Heart right ventricle (tissue), 16 donors: ENCODE measurements at regions of chr11 and their contacts with region 1.

Region 1: GRCh38 chr11:57205041-57205671 is 23.4 kb downstream of the LRRC55 start:
- DNase-seq: peak in 1 of 2 donors; percentile 30
- ATAC-seq: peak in 7 of 8 donors; percentile 13 to 49 (median 22)
- H3K4me3 ChIP-seq: no peak overlapping the region
- H3K27ac ChIP-seq: peak overlapping the region in 7 of 10 donors; percentile 6 to 83 (median 46)
- H3K4me1 ChIP-seq: peaks cover 26 to 84% (median 52%) of the 10 kb centered on the region in 9 donors
- H3K27me3 ChIP-seq: peaks cover 0 to 5% (median 0%) of the 10 kb centered on the region in 7 donors
- CTCF ChIP-seq: peak in 5 of 9 donors; percentile 16 to 48 (median 37)

Region 2: GRCh38 chr11:57237204-57237681 is 32.1 kb after region 1 on chr11 and contains the start of gene APLNR:
- intact Hi-C with region 1: loop called in 2 of 10 experiments (anchors 5 kb)
- DNase-seq: no peak
- ATAC-seq: peak; percentile 36 to 77 (median 69)
- H3K4me3 ChIP-seq: peak within 1 kb of the TSS; percentile 24 to 66 (median 52)
- H3K27ac ChIP-seq: peak within 1 kb of the TSS in 9 of 10 donors; percentile 37 to 89 (median 77)
- H3K4me1 ChIP-seq: peaks cover 6 to 51% (median 10%) of the 10 kb centered on the region in 9 donors
- H3K27me3 ChIP-seq: peaks cover 0 to 44% (median 21%) of the 10 kb centered on the region in 7 donors
- CTCF ChIP-seq: no peak
- total RNA-seq, gene APLNR: 7.5 to 39.3 (median 13.9) TPM

Region 3: DNA sequence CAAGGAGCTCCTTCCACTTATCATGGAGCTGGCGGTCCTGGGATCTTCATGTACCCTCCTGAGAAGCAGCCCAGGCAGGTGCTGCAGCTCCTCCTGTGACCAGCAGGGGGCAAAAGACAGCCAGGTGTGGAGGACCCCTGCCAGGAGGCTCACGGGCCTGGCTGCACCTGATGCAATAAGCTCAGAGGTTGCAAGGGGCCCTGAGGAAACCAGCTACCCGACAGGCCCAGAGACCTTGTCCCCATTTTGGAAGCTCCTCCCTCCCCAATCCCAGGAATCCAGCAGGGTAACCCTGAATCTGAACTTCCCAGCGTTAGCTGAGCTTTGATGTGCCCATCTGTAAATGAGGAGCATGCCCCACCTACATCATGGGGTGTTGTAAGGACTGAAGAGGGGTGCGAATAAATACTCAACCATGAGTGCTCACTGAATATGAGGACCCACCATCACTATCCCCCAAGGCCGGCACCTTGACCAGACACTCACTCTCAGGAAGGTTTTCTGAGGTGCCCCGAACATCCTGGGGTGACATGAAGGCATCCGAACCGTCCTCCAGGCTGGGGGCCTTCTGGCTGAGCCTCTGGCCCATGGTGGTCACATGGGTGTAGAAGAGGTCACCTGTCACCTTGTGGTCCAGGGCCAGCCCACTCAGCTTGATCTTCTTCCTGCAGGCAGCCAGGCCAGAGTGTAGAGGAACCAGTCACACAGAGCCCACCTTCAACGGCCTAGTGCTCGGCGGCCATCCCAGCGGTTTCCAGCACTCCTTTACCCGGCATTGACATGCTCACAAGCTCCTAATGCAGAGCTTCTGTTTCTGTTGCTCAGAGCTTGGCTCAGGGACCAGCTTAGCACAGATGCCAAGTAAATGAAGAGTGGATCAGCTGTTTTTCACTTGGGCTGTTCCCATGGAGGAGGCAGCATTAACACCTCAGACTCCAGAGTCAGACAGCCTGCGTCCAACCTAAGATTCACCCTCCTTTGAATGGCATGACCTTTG is 288.6 kb after region 1 on chr11:
- intact Hi-C with region 1: no loop called
- DNase-seq: peak in 1 of 2 donors; percentile 64
- ATAC-seq: peak in 7 of 8 donors; percentile 53 to 80 (median 64)
- H3K4me3 ChIP-seq: no peak overlapping the region
- H3K27ac ChIP-seq: no peak overlapping the region
- H3K4me1 ChIP-seq: peaks cover 0 to 8% (median 4%) of the 10 kb centered on the region in 9 donors
- H3K27me3 ChIP-seq: no peaks in the 10 kb centered on the region
- CTCF ChIP-seq: peak; percentile 86 to 93 (median 90)